ENCODE measurements at regions of chr4 and their contacts with region 1.

Region 1: DNA sequence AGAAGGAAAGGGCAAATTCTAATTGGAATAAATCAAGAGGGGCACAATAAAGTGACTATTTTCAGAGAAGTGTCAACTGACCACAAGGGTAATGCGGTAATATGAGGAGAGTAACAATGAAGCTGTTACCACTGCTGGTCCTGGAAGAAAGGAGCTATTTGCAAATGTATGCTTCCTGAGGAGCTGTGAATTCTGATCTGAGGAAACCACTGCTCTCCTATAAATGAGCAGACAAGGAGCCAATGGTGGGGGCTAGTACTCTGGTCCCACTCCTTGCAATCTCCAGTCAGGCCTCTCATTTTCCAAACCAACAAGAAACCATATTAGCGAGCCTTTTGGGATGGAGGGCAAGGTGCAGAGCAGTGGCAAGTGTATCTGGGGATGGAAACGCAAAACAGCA is 770.2 kb downstream of the FSTL5 start:
- DNase-seq: no peak
- ATAC-seq: no peak
- H3K4me3 ChIP-seq: no peak overlapping the region
- H3K27ac ChIP-seq: no peak overlapping the region
- H3K4me1 ChIP-seq: no peaks in the 10 kb centered on the region
- H3K27me3 ChIP-seq: no peaks in the 10 kb centered on the region
- CTCF ChIP-seq: no peak
- EP300 ChIP-seq: no peak
- POLR2A ChIP-seq: no peak
- RAD21 ChIP-seq: no peak

Region 2: GRCh38 chr4:161345741-161346140 is 47.9 kb before region 1 on chr4:
- CTCF ChIA-PET with region 1: no interaction called
- POLR2A ChIA-PET with region 1: no interaction called
- RAD21 ChIA-PET with region 1: no interaction called
- SMC1A ChIA-PET with region 1: interaction called, 10 read pairs
- in situ Hi-C with region 1: no loop called
- intact Hi-C with region 1: no loop called
- DNase-seq: no peak
- ATAC-seq: no peak
- H3K4me3 ChIP-seq: no peak overlapping the region
- H3K27ac ChIP-seq: no peak overlapping the region
- H3K4me1 ChIP-seq: no peaks in the 10 kb centered on the region
- H3K27me3 ChIP-seq: no peaks in the 10 kb centered on the region
- CTCF ChIP-seq: no peak
- EP300 ChIP-seq: no peak
- POLR2A ChIP-seq: no peak
- RAD21 ChIP-seq: no peak

Region 3: DNA sequence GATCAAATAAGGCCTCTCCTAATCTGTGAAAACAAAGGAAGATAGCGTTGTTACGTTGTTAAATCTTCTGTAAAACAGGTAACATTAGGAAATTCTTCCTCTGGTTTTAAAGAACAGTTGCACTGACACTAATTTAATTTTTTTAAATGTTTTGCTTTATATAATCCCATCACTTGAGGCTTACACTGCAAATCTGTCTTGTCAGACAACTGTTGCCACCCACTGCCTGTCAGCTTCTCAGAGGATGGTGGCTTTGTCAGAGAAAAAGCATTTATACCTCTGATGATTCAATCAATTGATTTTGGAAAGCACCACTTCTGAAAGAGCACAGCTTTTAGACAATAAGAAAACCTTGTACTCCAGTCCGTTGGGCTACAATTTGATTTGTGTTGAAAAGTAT is 28.9 kb before region 1 on chr4:
- CTCF ChIA-PET with region 1: no interaction called
- POLR2A ChIA-PET with region 1: no interaction called
- RAD21 ChIA-PET with region 1: no interaction called
- SMC1A ChIA-PET with region 1: interaction called, 10 read pairs
- in situ Hi-C with region 1: no loop called
- intact Hi-C with region 1: no loop called
- DNase-seq: no peak
- ATAC-seq: peak; percentile 29; the same call in 2 of the 3 replicates
- H3K4me3 ChIP-seq: no peak overlapping the region
- H3K27ac ChIP-seq: no peak overlapping the region
- H3K4me1 ChIP-seq: no peaks in the 10 kb centered on the region
- H3K27me3 ChIP-seq: no peaks in the 10 kb centered on the region
- CTCF ChIP-seq: no peak
- EP300 ChIP-seq: no peak
- POLR2A ChIP-seq: no peak
- RAD21 ChIP-seq: no peak

Region 4: GRCh38 chr4:161376275-161376674 is 17.3 kb before region 1 on chr4:
- CTCF ChIA-PET with region 1: interaction called, 4 read pairs
- POLR2A ChIA-PET with region 1: interaction called, 5 read pairs
- RAD21 ChIA-PET with region 1: interaction called, 3 read pairs
- SMC1A ChIA-PET with region 1: interaction called, 12 read pairs
- in situ Hi-C with region 1: no loop called
- intact Hi-C with region 1: no loop called
- DNase-seq: no peak
- ATAC-seq: no peak
- H3K4me3 ChIP-seq: no peak overlapping the region
- H3K27ac ChIP-seq: no peak overlapping the region
- H3K4me1 ChIP-seq: no peaks in the 10 kb centered on the region
- H3K27me3 ChIP-seq: no peaks in the 10 kb centered on the region
- CTCF ChIP-seq: no peak
- EP300 ChIP-seq: no peak
- POLR2A ChIP-seq: no peak
- RAD21 ChIP-seq: no peak

Region 5: DNA sequence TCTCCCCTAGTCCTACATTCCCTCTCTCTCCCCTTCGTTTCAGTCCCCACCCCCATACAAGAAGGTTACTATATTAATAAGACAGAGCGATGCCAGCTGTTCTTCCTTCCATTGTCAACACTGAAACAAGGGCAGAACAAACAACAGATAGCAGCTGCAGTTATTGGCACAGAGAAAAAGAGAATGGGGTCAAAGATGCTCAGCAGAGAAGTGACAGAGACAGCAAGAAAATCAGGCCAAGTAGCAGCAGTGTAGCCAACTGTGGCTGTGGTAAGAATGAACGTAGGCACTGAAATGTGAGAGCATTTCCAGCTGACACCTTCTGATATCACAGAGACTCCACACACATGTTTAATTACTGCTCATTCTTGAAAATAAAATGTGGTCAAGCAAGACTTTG is 128.4 kb after region 1 on chr4:
- CTCF ChIA-PET with region 1: no interaction called
- POLR2A ChIA-PET with region 1: no interaction called
- RAD21 ChIA-PET with region 1: no interaction called
- SMC1A ChIA-PET with region 1: no interaction called
- in situ Hi-C with region 1: no loop called
- intact Hi-C with region 1: no loop called
- DNase-seq: no peak
- ATAC-seq: no peak; the same call in 2 of the 3 replicates
- H3K4me3 ChIP-seq: no peak overlapping the region
- H3K27ac ChIP-seq: no peak overlapping the region
- H3K4me1 ChIP-seq: no peaks in the 10 kb centered on the region
- H3K27me3 ChIP-seq: no peaks in the 10 kb centered on the region
- CTCF ChIP-seq: no peak
- EP300 ChIP-seq: no peak
- POLR2A ChIP-seq: no peak
- RAD21 ChIP-seq: no peak

Region 6: GRCh38 chr4:161540265-161540664 is 146.7 kb after region 1 on chr4:
- CTCF ChIA-PET with region 1: no interaction called
- POLR2A ChIA-PET with region 1: no interaction called
- RAD21 ChIA-PET with region 1: no interaction called
- SMC1A ChIA-PET with region 1: no interaction called
- in situ Hi-C with region 1: no loop called
- intact Hi-C with region 1: no loop called
- DNase-seq: peak; percentile 20
- ATAC-seq: peak; percentile 85
- H3K4me3 ChIP-seq: no peak overlapping the region
- H3K27ac ChIP-seq: peak overlapping the region; percentile 13; the same call in 1 of the 2 replicates
- H3K4me1 ChIP-seq: peaks cover 3% of the 10 kb centered on the region; the same call in 1 of the 2 replicates
- H3K27me3 ChIP-seq: no peaks in the 10 kb centered on the region
- CTCF ChIP-seq: no peak
- EP300 ChIP-seq: no peak
- POLR2A ChIP-seq: no peak
- RAD21 ChIP-seq: no peak

Measured in GM12878 (cell line).